ENCODE measurements at regions of chr20 and their contacts with region 1.

Region 1: DNA sequence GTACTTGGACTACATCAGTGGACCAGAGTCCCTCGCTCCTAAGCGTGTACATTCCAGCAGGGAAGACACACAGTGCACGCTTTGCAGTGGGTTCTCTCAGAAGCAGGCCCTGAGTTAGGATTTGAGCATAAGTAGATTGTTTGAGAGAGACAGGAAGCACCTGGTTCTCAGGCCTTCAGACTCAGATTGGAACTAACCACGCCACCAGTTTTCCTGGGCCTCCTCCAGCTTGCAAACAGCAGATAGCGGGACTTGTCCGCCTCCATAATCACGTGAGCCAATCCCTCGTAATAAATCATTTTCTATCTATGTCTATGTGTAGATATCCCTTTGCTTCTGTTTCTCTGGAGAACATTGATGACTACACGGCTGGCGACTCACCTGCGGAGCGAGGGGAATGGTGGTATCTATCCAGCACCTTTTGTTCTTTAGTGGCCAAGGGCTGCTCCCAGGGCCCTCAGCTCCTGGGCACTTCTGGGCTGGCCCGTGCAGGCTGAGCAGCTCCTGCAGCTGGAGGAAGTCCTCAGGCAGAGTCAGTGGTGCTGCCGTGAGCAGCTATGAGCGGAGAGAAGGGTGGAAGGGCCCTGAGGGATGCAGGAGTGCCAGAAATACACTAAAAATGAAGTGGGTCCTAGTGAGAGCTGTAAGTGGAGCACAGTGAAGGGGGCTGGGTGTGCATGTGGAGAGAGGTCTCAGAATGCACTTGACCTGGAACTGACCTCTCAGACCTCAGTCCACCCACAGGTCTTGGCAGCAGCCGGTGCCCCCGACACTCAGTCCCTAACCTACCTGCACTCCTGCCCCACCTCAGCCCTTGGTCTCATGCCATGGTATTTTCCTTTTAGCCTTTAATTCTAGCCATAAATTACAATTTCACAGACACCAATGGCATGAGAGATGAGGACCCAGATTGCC is 76.9 kb downstream of the STK35 start:
- DNase-seq: peak in 4 of 5 donors; percentile 27 to 44 (median 36)
- H3K4me3 ChIP-seq: no peak overlapping the region
- H3K27ac ChIP-seq: no peak overlapping the region
- H3K4me1 ChIP-seq: peaks cover 1% of the 10 kb centered on the region
- H3K27me3 ChIP-seq: no peaks in the 10 kb centered on the region
- CTCF ChIP-seq: no peak
- EP300 ChIP-seq: no peak
- POLR2A ChIP-seq: no peak

Region 2: GRCh38 chr20:1764136-1765033 is 414.2 kb before region 1 on chr20:
- intact Hi-C with region 1: loop called in 2 of 4 experiments (anchors 5 to 10 kb)
- DNase-seq: peak; percentile 68 to 80 (median 77)
- H3K4me3 ChIP-seq: no peak overlapping the region
- H3K27ac ChIP-seq: no peak overlapping the region
- H3K4me1 ChIP-seq: peaks cover 2% of the 10 kb centered on the region
- H3K27me3 ChIP-seq: no peaks in the 10 kb centered on the region
- CTCF ChIP-seq: peak; percentile 15 to 55 (median 38)
- EP300 ChIP-seq: no peak
- POLR2A ChIP-seq: no peak

Measured in ovary (tissue), 10 donors.